ENCODE measurements at regions of chr14 and their contacts with region 1.

Region 1: GRCh38 chr14:92585981-92586937 is 72.7 kb downstream of the RIN3 start:
- DNase-seq: peak; percentile 80 to 85
- ATAC-seq: peak; percentile 87
- H3K4me3 ChIP-seq: no peak overlapping the region
- H3K27ac ChIP-seq: peak overlapping the region; percentile 91 to 98
- H3K4me1 ChIP-seq: peaks cover 6 to 16% of the 10 kb centered on the region in 2 donors
- H3K27me3 ChIP-seq: no peaks in the 10 kb centered on the region

Region 2: DNA sequence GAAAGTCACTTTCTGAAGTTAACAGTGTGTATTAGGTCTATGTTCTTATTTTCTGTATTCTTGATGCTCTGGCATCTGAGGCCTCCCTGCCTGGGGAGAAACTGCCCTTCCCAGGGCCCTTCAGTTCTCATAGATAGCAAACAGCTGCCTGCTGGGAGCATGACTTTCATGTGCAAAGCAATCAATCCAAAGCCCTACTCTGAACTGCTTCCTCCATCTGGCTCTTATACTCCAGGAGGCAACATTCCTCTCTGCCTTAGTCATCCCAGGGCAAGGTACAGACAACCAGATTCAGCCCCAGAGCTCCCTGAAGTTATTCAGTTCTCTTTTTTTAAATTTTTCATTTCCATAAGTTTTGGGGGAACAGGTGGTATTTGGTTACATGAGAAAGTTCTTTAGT is 114.3 kb before region 1 on chr14:
- intact Hi-C with region 1: no loop called
- DNase-seq: no peak
- ATAC-seq: no peak
- H3K4me3 ChIP-seq: no peak overlapping the region
- H3K27ac ChIP-seq: no peak overlapping the region
- H3K4me1 ChIP-seq: peaks cover 4 to 5% of the 10 kb centered on the region in 2 donors
- H3K27me3 ChIP-seq: no peaks in the 10 kb centered on the region

Region 3: GRCh38 chr14:92513204-92513973 is 72.9 kb before region 1 on chr14 and contains the start of gene RIN3:
- intact Hi-C with region 1: loop called in 1 of 2 experiments (anchors 5 kb)
- DNase-seq: peak; percentile 81 to 89
- ATAC-seq: peak; percentile 72
- H3K4me3 ChIP-seq: peak within 1 kb of the TSS; percentile 70 to 74
- H3K27ac ChIP-seq: peak within 1 kb of the TSS; percentile 53 to 80
- H3K4me1 ChIP-seq: no peaks in the 10 kb centered on the region
- H3K27me3 ChIP-seq: no peaks in the 10 kb centered on the region
- total RNA-seq, gene RIN3: 49.1 to 53.8 TPM

Region 4: DNA sequence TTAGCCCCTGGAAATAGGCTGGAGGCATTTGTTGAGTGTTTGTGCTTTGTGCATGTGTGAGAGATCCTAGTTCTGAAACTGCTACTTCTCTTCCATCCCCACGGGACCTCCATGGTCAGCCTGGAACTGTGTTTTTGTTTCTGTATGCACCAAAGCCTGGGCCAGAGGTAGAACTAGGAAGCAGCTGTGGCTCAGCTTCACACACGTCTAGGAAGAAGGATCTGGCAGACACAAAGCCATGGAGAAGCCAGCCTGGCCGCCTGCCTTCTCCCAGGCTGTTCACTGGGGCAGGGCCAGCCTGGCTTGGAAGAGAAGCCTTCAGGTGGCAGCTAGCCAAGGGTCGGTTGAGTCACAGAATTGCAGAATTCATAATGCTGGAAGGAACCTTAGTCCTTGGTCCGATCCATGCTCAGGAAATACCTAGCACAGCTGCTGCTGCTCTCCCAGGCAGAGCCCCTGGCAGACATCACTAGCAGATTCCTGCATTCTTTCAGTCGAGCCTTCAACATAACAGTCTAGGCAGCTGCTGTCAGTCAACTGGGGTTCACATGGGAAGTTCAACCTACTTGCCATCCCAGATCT is 45.7 kb before region 1 on chr14:
- intact Hi-C with region 1: loop called (anchors 5 kb)
- DNase-seq: peak; percentile 97 to 98
- ATAC-seq: peak; percentile 95
- H3K4me3 ChIP-seq: no peak overlapping the region
- H3K27ac ChIP-seq: peak overlapping the region; percentile 61 to 76
- H3K4me1 ChIP-seq: peaks cover 0 to 2% of the 10 kb centered on the region in 2 donors
- H3K27me3 ChIP-seq: no peaks in the 10 kb centered on the region

Region 5: DNA sequence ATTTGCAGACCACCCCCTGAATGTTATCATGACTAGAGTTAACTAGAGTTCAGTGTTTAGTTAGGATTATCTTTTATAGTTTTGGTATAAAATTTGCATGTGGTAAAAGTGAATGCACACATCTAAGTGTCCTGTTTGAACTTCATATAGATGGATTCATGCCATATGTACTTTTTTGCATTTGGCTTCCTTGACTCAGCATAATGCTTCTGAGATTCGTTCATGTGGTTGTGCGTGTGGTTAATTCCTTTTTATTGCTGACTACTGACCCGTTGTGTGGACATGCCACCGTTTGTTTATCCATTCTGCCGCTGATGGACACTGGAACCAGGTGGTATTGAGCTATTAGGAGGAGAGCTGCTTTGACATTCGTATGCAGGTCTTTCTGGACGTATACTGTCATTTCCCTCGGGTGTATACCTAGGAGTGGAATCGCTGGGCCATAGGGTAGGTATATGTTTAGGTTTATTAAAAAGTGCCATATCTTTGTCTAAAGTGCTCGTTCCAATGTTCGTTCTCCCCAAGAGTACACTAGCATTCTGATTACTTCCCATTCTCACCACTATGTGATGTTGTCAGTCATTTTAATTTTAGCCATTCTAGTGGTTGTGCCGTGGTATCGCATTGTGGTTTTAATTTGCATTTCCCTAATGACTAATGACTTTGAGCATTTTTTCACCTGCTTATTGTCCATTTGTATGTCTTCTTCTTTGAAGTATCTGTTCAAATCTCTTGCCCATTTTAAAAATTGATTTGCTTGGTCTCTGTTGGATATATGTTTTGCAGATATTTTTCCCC is 35.0 kb before region 1 on chr14:
- intact Hi-C with region 1: loop called in 1 of 2 experiments (anchors 5 kb)
- DNase-seq: peak in 1 of 2 donors; percentile 12
- ATAC-seq: no peak
- H3K4me3 ChIP-seq: no peak overlapping the region
- H3K27ac ChIP-seq: peak overlapping the region in 1 of 2 donors; percentile 31
- H3K4me1 ChIP-seq: no peaks in the 10 kb centered on the region
- H3K27me3 ChIP-seq: no peaks in the 10 kb centered on the region

Region 6: DNA sequence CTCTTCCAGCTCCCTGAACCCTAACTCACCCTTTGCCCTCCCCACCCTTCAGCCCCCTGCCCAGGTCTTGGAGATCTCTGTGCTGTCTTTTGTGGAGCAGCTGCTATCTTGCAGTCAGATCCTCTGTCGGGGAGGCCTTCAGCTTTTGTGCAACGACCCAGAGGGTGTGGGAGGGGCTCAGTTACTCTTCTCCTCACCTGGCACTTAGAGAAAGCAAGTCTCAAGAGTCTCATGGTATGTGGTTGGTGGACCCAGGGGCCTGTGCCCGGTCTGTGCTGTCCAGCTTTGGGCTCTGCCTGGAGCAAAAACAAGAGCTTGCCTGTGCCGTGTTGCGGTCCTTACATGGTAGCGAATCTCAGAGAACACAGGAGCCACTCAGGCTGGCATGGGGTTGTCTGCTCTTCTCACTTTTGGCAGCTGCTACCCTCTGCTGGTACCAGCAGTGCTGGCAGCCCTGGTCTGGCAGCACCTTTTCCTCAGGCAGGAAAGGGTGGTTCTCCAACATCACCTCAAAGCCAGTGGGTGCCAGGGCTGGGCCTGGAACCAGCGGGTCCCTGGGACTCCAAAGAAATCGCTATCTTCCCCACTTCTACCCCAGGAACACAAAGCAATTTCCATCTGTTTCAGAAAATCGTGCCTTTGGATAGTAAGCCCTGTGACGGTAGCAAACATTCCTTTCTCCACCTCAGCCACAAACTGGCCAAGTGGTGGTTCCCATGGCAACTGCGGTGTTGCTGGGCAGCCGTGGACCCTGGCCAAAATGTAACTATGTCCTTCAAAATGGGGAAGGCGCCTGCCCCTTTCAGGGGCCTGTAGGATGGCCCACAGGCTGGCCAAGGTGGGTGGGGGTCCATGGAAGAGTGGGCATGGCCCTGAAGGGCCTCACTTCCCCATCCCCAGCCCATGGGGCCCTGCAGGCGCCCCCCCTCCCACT is 17.3 kb after region 1 on chr14:
- intact Hi-C with region 1: loop called (anchors 2 kb)
- DNase-seq: peak; percentile 77 to 88
- ATAC-seq: peak; percentile 84
- H3K4me3 ChIP-seq: no peak overlapping the region
- H3K27ac ChIP-seq: peak overlapping the region; percentile 90 to 98
- H3K4me1 ChIP-seq: peaks cover 0 to 3% of the 10 kb centered on the region in 2 donors
- H3K27me3 ChIP-seq: no peaks in the 10 kb centered on the region